A673 (cell line): ENCODE measurements at regions of chr13 and their contacts with region 1.

Region 1: GRCh38 chr13:93368718-93369117 is 142.1 kb downstream of the GPC6 start:
- DNase-seq: peak; percentile 60
- H3K4me3 ChIP-seq: no peak overlapping the region
- H3K27ac ChIP-seq: peak overlapping the region; percentile 76
- H3K4me1 ChIP-seq: peaks cover 49% of the 10 kb centered on the region
- H3K27me3 ChIP-seq: no peaks in the 10 kb centered on the region
- CTCF ChIP-seq: no peak

Region 2: DNA sequence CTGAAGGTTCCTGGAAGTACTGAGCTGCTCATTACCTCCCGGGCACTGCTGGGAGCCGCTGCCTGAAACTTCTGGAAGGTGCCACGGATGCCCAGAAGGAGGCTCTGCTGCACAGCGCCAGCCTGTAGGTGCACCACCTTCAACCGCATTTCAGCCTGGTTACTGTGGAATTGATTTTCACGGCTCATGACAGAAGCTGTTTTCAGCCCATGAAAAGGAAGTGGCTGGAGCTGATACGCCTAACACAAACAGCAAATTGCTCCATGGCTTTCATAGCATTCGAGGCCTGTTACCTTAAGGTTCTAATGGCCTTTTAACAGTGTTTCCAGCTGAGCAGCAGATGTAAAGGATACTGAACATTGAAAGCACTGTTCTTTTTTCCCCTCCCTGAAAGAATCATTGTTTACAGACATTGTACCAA is 120.1 kb before region 1 on chr13:
- CTCF ChIA-PET with region 1: no interaction called
- POLR2A ChIA-PET with region 1: no interaction called
- intact Hi-C with region 1: loop called (anchors 5 kb)
- DNase-seq: peak; percentile 92
- H3K4me3 ChIP-seq: no peak overlapping the region
- H3K27ac ChIP-seq: peak overlapping the region; percentile 77
- H3K4me1 ChIP-seq: peaks cover 67% of the 10 kb centered on the region
- H3K27me3 ChIP-seq: no peaks in the 10 kb centered on the region
- CTCF ChIP-seq: peak; percentile 81

Region 3: DNA sequence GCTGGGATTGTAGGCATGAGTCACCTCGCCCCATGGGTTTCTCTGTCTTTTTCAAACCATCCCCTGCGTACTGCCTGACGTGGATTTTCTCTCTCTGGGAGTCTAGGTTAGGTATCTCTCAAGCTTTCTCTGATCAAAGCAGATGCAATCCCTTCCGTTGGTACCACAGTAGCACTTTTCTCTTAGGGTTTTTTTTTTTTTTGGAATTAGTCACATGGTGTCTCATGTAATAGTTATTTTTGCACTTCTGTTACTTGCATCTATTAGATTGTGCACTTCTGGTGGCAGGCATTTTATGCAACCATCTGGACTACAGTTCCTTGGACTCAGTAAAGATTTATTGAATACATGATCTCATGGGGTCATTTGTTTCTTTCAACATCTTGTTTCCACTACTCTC is 70.0 kb before region 1 on chr13:
- CTCF ChIA-PET with region 1: no interaction called
- POLR2A ChIA-PET with region 1: no interaction called
- intact Hi-C with region 1: no loop called
- DNase-seq: no peak
- H3K4me3 ChIP-seq: no peak overlapping the region
- H3K27ac ChIP-seq: no peak overlapping the region
- H3K4me1 ChIP-seq: peaks cover 15% of the 10 kb centered on the region
- H3K27me3 ChIP-seq: no peaks in the 10 kb centered on the region
- CTCF ChIP-seq: no peak

Region 4: DNA sequence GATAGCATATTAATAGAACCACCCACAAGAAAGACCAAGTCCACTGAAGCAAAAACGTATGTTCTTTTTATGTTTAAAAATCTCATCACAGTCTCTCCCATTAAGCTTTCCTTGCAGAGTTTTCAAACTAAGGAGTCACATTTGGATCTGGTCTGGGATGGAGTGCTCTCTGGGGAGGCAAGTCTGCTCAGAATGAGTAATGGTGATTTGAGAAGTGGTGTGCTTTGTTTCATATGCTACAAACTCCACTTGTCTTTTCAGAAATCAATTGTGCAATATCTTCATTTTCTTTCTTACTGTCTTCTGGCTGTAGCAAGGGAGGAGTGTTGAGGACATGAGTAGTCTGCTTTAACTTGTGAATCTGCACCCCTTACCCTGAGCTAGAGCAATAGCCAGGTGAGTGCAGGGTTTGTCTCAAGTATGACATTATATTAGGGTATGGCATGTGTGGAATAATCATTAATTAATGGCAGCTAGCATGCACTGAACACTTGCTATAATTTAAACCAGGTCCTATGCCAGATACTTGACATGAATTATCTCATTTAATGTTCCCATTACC is 29.5 kb after region 1 on chr13:
- CTCF ChIA-PET with region 1: no interaction called
- POLR2A ChIA-PET with region 1: interaction called, 12 read pairs
- intact Hi-C with region 1: no loop called
- DNase-seq: peak; percentile 26
- H3K4me3 ChIP-seq: no peak overlapping the region
- H3K27ac ChIP-seq: no peak overlapping the region
- H3K4me1 ChIP-seq: peaks cover 28% of the 10 kb centered on the region
- H3K27me3 ChIP-seq: no peaks in the 10 kb centered on the region
- CTCF ChIP-seq: no peak

Region 5: DNA sequence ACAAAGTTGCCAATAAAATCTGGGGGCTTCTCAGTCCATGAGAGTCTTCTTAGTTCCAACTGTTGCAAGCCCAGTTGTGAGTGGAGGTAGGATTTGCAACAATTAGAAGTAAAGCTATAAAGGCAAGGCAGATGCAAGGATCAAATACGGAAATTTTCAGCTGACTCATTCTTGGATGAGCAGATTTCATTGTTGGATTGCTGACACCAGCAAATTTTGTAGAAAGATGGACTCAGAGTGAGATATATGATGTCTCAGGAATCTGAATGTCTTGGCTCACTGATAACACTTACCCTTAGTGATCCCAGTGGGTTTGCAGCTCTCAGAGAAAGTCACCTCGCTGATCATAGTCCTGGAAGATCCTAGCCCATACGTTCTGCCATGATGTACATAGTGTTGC is 66.9 kb after region 1 on chr13:
- CTCF ChIA-PET with region 1: no interaction called
- POLR2A ChIA-PET with region 1: no interaction called
- intact Hi-C with region 1: no loop called
- DNase-seq: peak; percentile 27
- H3K4me3 ChIP-seq: no peak overlapping the region
- H3K27ac ChIP-seq: no peak overlapping the region
- H3K4me1 ChIP-seq: peaks cover 4% of the 10 kb centered on the region
- H3K27me3 ChIP-seq: no peaks in the 10 kb centered on the region
- CTCF ChIP-seq: no peak

Region 6: DNA sequence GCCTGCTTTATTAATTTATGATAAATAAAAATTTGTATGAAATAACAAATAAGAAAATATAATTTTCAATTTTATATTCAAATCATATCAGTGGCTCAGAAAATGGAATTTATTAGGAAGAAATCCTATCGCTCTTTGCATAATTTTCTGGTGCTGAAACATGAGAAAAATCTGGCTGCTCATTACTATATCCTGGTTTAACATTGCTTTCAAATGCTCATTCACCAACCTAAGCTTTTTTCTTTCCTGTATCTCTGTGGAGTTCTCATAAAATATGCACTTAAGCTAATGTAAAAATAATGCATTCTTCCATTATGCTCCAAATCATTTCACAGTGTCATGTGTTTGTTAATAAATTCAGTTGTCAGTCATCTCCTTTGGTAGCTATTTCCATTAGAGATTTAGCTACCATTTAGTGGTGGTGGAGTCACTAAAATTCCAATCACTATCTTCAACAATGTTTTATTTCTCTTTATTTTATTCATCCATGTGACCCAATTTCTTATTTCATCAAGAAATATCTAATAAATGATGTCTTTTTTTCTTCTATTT is 612.8 kb after region 1 on chr13:
- CTCF ChIA-PET with region 1: no interaction called
- POLR2A ChIA-PET with region 1: interaction called, 15 read pairs
- intact Hi-C with region 1: no loop called
- DNase-seq: peak; percentile 45
- H3K4me3 ChIP-seq: no peak overlapping the region
- H3K27ac ChIP-seq: peak overlapping the region; percentile 14
- H3K4me1 ChIP-seq: peaks cover 56% of the 10 kb centered on the region
- H3K27me3 ChIP-seq: no peaks in the 10 kb centered on the region
- CTCF ChIP-seq: no peak